ENCODE measurements at regions of chr18 and their contacts with region 1.

Region 1: GRCh38 chr18:23503038-23503962 is at the start of gene RMC1:
- DNase-seq: peak; percentile 96
- CTCF ChIP-seq: peak; percentile 25

Region 2: DNA sequence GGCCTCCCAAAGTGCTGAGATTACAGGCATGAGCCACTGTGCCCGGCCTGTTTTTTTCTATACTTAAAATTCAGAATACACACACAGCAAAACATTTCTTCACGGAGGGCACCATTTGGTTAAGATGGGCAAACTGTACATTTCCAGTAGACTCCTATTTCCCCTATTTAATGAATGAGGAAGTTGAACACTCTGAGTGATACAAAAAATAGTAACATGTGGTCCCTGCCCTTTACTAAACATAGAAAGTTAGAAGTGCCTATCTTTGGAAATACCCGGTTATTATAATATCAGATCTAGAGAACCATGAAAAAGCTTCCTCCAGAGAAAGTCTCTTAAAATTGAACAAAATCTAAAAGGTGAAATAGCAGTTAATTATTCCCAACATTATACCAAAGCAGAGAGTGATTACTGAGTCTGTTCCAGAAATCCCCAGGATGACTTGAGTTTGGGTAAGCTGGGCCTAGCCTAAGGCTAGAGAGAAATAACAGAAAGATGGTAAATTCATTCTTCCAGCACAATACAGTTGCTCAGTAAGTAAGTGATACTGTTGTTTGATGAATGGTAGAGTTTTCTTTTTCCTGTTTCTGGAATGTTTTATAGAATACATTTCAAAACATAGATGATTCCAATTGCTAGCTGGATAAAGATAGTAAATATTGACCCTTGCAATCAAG is 23.3 kb before region 1 on chr18:
- CTCF ChIA-PET with region 1: interaction called, 178 read pairs
- POLR2A ChIA-PET with region 1: interaction called, 3 read pairs
- DNase-seq: no peak
- CTCF ChIP-seq: no peak

Region 3: DNA sequence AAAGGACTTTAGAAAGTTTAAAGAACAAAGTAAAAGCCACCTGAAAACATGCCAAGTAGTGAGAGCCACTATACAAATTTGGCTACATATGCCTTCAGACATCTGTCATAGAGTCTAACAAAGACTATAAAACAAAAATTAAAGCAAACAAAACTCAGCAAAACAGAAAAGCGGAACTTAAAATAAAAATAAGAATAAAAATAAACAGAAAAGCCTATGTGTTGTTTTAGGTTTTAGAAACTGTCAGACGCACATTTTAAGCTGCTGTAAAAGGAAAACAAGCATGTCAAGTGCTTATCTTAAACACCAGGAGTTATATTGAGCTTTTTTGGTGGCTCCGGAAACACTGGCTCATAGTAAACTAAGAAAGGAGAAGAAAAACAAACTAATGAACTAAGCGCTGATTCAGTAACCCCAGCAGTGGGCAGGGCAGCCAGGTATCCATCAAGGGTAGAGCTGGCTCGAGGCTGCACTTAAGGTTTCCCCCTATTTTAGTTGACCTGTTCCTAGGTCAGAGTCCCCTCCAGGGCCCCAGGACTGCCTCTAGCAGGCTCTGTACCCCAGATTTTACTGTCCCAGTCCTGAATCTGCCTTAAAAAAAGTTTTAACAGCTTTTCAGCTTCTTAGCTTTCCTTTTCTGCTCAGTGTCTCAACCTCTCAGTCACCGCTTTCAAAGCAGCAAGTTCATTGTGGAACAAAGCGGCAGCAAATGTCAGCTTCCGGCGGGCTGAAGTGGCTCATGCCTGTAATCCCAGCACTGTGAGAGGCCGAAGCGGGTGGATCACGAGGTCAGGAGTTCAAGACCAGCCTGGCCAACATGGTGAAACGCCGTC is 15.3 kb before region 1 on chr18:
- CTCF ChIA-PET with region 1: interaction called, 178 read pairs
- POLR2A ChIA-PET with region 1: interaction called, 3 read pairs
- DNase-seq: no peak
- CTCF ChIP-seq: no peak

Region 4: GRCh38 chr18:23521907-23522306 is 18.6 kb after region 1 on chr18:
- CTCF ChIA-PET with region 1: interaction called, 46 read pairs
- POLR2A ChIA-PET with region 1: interaction called, 3 read pairs
- DNase-seq: no peak
- CTCF ChIP-seq: no peak

Region 5: GRCh38 chr18:23580677-23581367 is 77.5 kb after region 1 on chr18:
- CTCF ChIA-PET with region 1: interaction called, 15 read pairs
- POLR2A ChIA-PET with region 1: no interaction called
- DNase-seq: no peak
- CTCF ChIP-seq: no peak

Region 6: DNA sequence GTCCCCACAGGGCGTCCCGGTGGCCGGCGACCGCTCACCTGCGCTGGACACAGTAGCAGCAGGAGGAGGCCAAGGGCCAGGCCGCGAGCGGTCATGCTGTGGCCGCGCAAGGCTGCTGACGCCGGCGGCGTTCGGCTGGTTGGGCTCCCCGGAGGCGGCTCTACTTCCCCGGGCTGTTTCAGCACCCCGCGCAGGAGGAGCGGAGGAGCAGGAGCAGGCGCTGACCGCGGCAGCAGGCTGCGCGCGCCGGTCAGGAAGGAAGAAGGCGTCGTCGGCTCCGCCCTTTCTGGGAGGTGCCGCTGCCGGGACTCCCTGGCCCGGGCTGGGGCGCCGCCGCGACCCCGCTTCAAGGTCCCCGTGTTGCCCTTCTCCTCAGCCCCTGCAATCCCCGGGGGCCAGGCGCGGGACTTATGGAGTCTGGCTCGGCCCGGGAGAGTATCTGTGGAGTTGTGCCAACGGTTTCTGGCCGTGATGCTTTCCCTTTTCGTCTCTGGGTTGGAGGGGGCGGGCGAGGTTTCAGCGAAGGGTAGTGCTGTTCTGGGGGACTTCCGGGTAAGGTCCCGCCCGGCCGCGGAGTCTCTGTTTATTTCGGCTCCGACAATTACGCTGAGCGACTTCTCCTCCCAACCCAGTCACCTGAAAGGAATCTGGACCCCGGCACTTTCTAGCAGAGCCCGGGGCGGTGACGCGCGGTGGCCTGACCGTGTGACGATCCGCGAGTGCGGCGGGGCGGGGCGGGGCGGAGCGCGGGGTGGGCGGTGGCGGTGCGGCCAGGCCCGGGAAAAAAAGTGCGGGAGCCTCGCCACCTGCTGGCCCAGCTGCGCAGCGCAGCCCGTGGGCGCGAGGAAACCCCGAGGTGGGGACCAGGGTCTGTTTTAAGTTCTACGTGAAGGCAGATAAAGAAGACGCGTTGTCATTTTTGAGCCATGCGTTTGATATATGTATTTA is 83.2 kb after region 1 on chr18 and contains the start of gene NPC1:
- CTCF ChIA-PET with region 1: interaction called, 19 read pairs
- POLR2A ChIA-PET with region 1: no interaction called
- DNase-seq: peak; percentile 94
- CTCF ChIP-seq: peak; percentile 93

Measured in GM10248 (cell line).